GM18951 (cell line): ENCODE measurements at regions of chr12 and their contacts with region 1.

Region 1: DNA sequence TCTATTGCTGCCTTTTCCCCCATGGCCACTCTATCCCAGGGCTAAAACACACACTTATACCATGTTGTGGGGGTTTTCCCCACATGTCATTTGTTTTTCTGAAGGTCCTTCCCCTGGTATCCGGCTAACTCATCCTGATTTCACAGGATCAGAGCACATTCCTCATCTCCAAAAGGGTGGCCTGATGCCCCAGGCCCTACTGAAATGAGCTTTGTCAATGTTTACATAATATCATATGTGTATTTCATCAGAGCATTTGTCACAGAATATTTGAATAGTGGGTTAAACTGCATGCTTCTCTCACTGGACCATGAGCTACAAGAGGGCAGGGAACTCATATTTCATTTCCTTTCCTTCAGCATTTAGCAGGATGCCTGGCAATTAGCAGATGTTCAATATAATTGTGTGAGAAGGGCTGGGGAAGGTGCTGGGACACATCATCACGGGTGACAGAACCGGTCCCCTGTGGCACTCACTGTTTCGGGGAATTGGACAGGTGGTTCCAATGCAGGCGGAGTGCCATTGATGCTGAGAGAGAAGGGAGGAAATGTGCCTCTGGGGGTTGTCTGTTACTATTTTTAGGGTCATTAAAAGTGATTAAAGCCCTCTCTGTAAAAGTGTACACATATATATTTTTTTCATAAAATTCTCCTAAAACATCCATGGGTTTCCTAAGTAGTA is 26.8 kb downstream of the EMP1 start:
- POLR2A ChIP-seq: no peak

Region 2: GRCh38 chr12:12916135-12916944 is 307.0 kb before region 1 on chr12:
- in situ Hi-C with region 1: loop called (anchors 10 kb)
- POLR2A ChIP-seq: no peak

Region 3: GRCh38 chr12:13896063-13896626 is 672.8 kb after region 1 on chr12:
- in situ Hi-C with region 1: no loop called
- POLR2A ChIP-seq: no peak